Activated B cell treated with CpG ODN at 0.5 μM for 24 hours (primary cell): ENCODE measurements at regions of chr2 and their contacts with region 1.

Region 1: DNA sequence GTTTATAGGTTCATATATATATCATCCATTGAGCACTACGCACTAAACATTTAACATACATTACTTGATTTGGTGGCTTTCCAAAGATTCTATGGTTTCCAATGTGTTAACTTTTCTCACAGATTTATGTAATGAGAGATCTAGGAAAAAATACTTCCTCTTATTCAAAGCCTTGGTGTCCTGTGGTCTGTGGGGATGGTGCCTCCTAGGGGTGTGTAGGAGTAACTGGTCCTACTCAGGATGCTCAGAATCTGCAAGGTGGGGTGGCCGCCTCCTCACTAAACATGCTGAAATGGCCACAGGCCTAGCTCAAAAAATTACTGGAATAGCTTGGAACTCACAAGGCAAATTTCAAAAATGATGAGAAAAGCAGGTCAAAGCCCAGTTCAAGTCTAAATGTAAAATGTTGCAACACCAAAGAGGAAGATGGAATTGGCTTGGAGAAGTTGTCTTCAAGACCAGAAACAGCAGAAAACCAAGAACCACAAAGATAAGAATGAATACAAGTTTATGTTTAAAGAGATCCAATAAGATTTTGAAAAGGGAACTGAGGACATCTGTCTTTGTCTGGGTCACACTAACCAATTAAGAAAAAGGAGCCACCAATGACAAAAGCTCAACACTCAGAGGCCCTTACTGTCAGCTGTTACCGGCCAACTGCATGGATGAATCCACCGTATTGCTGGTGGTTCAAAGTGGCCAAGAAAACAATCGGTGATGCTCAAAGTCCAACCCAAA is 11.5 kb downstream of the GPR55 start:
- DNase-seq: peak; percentile 16
- ATAC-seq: peak; percentile 94
- H3K4me3 Mint-ChIP-seq: no peak overlapping the region
- H3K27ac Mint-ChIP-seq: no peak overlapping the region
- H3K4me1 Mint-ChIP-seq: peaks cover 18% of the 10 kb centered on the region
- H3K27me3 Mint-ChIP-seq: peaks cover 1% of the 10 kb centered on the region
- CTCF ChIP-seq: no peak

Region 2: DNA sequence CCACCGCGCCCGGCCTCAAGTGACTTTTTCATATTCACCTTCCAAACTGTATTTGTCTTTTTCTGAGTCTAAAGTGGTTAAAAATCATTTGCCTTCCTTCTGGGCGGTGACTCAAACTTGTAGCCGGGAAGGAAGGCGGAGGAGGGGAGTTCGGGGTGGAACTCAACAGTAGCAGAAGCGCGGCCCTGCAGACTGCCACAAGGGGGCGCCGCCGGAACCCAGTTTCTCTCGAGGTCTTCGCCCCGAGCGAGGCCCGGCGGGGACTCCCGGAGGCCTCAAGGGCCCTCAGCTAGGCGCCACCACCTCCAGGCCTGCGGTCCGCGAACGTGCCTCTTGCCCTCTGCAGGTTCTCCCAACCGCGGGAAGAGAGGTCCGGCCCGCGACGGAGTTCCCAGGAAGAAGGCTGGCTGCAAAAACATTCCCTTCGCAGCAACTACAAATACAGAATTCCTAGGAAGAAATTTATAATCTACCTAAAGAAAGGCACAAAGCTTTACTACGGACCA is 65.6 kb before region 1 on chr2:
- CTCF ChIA-PET with region 1: interaction called, 33 read pairs
- POLR2A ChIA-PET with region 1: no interaction called
- intact Hi-C with region 1: loop called (anchors 1 kb)
- DNase-seq: peak; percentile 84
- ATAC-seq: peak; percentile 97
- H3K4me3 Mint-ChIP-seq: peak overlapping the region; percentile 50
- H3K27ac Mint-ChIP-seq: no peak overlapping the region
- H3K4me1 Mint-ChIP-seq: peaks cover 8% of the 10 kb centered on the region
- H3K27me3 Mint-ChIP-seq: peaks cover 22% of the 10 kb centered on the region
- CTCF ChIP-seq: peak; percentile 24

Region 3: GRCh38 chr2:230864598-230865306 is 48.8 kb before region 1 on chr2 and contains the start of gene ITM2C:
- CTCF ChIA-PET with region 1: interaction called, 6 read pairs
- POLR2A ChIA-PET with region 1: no interaction called
- intact Hi-C with region 1: loop called (anchors 1 kb)
- DNase-seq: peak; percentile 73
- ATAC-seq: peak; percentile 83
- H3K4me3 Mint-ChIP-seq: peak within 1 kb of the TSS; percentile 89
- H3K27ac Mint-ChIP-seq: peak within 1 kb of the TSS; percentile 70
- H3K4me1 Mint-ChIP-seq: peaks cover 57% of the 10 kb centered on the region
- H3K27me3 Mint-ChIP-seq: peaks cover 2% of the 10 kb centered on the region
- CTCF ChIP-seq: no peak
- total RNA-seq, gene ITM2C: 102 and 117 TPM in 2 replicates